B cell (primary cell): ENCODE measurements at regions of chr18 and their contacts with region 1.

Region 1: GRCh38 chr18:46660955-46661749 is 4.1 kb upstream of the LOXHD1 start:
- DNase-seq: no peak
- ATAC-seq: no peak
- H3K4me3 ChIP-seq: no peak overlapping the region
- H3K4me3 Mint-ChIP-seq: no peak overlapping the region
- H3K27ac ChIP-seq: no peak overlapping the region
- H3K27ac Mint-ChIP-seq: no peak overlapping the region
- H3K4me1 ChIP-seq: no peaks in the 10 kb centered on the region
- H3K4me1 Mint-ChIP-seq: no peaks in the 10 kb centered on the region
- H3K27me3 ChIP-seq: peaks cover 0 to 16% (median 0%) of the 10 kb centered on the region in 4 experiments
- H3K27me3 Mint-ChIP-seq: peaks cover 19% of the 10 kb centered on the region
- CTCF ChIP-seq: no peak

Region 2: GRCh38 chr18:46213295-46213694 is 447.9 kb before region 1 on chr18:
- CTCF ChIA-PET with region 1: interaction called, 4 read pairs
- POLR2A ChIA-PET with region 1: no interaction called
- intact Hi-C with region 1: loop called (anchors 2 kb)
- DNase-seq: peak; percentile 42
- ATAC-seq: peak; percentile 33
- H3K4me3 ChIP-seq: no peak overlapping the region
- H3K4me3 Mint-ChIP-seq: no peak overlapping the region
- H3K27ac ChIP-seq: no peak overlapping the region
- H3K27ac Mint-ChIP-seq: no peak overlapping the region
- H3K4me1 ChIP-seq: peaks cover 10 to 20% of the 10 kb centered on the region in 2 donors
- H3K4me1 Mint-ChIP-seq: peaks cover 61% of the 10 kb centered on the region
- H3K27me3 ChIP-seq: no peaks in the 10 kb centered on the region
- H3K27me3 Mint-ChIP-seq: no peaks in the 10 kb centered on the region
- CTCF ChIP-seq: peak; percentile 79

Region 3: GRCh38 chr18:46281185-46282176 is 379.7 kb before region 1 on chr18:
- CTCF ChIA-PET with region 1: interaction called, 20 read pairs
- POLR2A ChIA-PET with region 1: no interaction called
- intact Hi-C with region 1: no loop called
- DNase-seq: peak; percentile 61
- ATAC-seq: peak; percentile 87
- H3K4me3 ChIP-seq: no peak overlapping the region
- H3K4me3 Mint-ChIP-seq: no peak overlapping the region
- H3K27ac ChIP-seq: no peak overlapping the region
- H3K27ac Mint-ChIP-seq: no peak overlapping the region
- H3K4me1 ChIP-seq: peaks cover 0 to 4% of the 10 kb centered on the region in 2 donors
- H3K4me1 Mint-ChIP-seq: peaks cover 6% of the 10 kb centered on the region
- H3K27me3 ChIP-seq: no peaks in the 10 kb centered on the region
- H3K27me3 Mint-ChIP-seq: no peaks in the 10 kb centered on the region
- CTCF ChIP-seq: peak; percentile 93

Region 4: GRCh38 chr18:46649071-46649862 is 11.9 kb before region 1 on chr18:
- CTCF ChIA-PET with region 1: interaction called, 19 read pairs
- POLR2A ChIA-PET with region 1: no interaction called
- intact Hi-C with region 1: no loop called
- DNase-seq: no peak
- ATAC-seq: no peak
- H3K4me3 ChIP-seq: no peak overlapping the region
- H3K4me3 Mint-ChIP-seq: no peak overlapping the region
- H3K27ac ChIP-seq: no peak overlapping the region
- H3K27ac Mint-ChIP-seq: no peak overlapping the region
- H3K4me1 ChIP-seq: no peaks in the 10 kb centered on the region
- H3K4me1 Mint-ChIP-seq: no peaks in the 10 kb centered on the region
- H3K27me3 ChIP-seq: no peaks in the 10 kb centered on the region
- H3K27me3 Mint-ChIP-seq: peaks cover 4% of the 10 kb centered on the region
- CTCF ChIP-seq: no peak